ENCODE measurements at regions of chr9 and their contacts with region 1.

Region 1: DNA sequence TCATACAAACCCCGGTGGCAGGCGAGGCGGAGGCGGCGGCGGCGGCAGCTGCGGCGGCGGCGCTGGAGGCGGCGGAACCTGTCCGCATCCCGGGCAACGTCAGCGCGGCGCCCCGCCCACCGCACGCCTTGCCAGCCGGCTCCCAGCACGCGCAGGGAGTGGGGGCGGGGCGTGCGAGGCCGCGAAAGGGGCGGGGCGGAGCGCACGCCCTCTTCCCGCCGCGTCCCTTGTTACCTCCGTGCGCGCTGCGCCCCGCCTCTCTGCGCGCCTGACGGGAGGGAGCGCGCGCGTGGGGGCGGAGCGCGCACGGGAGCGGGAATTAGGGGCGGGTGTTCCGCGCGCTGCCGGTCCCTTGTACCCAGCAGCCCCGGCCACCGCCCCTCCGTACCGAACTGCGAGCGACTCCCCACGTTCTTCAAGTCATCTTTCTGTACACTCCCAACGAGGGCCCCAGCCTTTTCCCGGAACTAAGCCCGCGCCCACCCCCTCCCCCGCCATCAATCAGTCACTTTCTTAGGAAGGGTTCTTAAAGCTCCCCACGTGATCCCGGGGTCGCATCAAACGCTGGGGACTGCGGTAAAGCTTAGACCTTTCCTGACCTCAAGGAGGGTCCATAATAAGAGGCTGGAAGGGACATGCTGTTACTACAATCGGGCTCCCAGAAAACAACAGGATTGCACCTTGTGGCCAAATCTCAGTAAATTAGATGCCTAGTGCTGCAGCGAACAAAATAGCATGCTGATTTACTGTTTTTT is at the start of gene AGTPBP1:
- DNase-seq: peak; percentile 78
- ATAC-seq: peak; percentile 86
- H3K4me3 ChIP-seq: peak within 1 kb of the TSS; percentile 78 to 95 (median 84)
- H3K27ac ChIP-seq: peak within 1 kb of the TSS; percentile 84
- H3K4me1 ChIP-seq: peaks cover 39% of the 10 kb centered on the region
- H3K27me3 ChIP-seq: peaks cover 0 to 4% of the 10 kb centered on the region in 2 experiments; a peak in 2 of 5 replicates
- CTCF ChIP-seq: no peak
- EP300 ChIP-seq: no peak; a peak in 1 of 4 replicates
- POLR2A ChIP-seq: peak in 1 of 2 experiments; percentile 55; a peak in 1 of 4 replicates
- RAD21 ChIP-seq: no peak; the same call in 1 of the 2 replicates
- total RNA-seq, gene AGTPBP1: 22.3 and 23.9 TPM in 2 replicates

Region 2: GRCh38 chr9:85702726-85703289 is 39.2 kb before region 1 on chr9:
- CTCF ChIA-PET with region 1: no interaction called
- POLR2A ChIA-PET with region 1: no interaction called
- in situ Hi-C with region 1: no loop called
- intact Hi-C with region 1: loop called (anchors 1 kb)
- DNase-seq: no peak
- ATAC-seq: no peak
- H3K4me3 ChIP-seq: no peak overlapping the region
- H3K27ac ChIP-seq: no peak overlapping the region
- H3K4me1 ChIP-seq: no peaks in the 10 kb centered on the region
- H3K27me3 ChIP-seq: no peaks in the 10 kb centered on the region
- CTCF ChIP-seq: no peak
- EP300 ChIP-seq: no peak
- POLR2A ChIP-seq: no peak
- RAD21 ChIP-seq: no peak

Region 3: DNA sequence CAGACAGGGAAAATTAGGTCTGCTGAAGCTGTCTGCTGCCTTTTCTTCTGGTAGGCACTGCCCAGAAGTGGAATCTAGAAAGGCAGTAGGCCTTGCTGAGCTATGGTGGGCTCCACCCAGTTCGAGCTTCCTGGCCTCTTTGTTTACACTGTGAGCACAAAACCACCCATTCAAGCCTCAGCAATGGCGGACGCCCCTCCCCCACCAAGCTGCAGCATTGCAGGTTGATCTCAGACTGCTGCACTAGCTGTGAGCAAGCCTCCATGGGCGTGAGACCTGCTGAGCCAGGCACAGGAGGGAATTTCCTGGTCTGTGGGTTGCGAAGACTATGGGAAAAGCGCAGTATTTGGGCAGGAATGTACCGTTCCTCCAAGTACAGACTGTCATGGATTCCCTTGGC is 18.8 kb before region 1 on chr9:
- CTCF ChIA-PET with region 1: no interaction called
- POLR2A ChIA-PET with region 1: interaction called, 7 read pairs
- in situ Hi-C with region 1: no loop called
- intact Hi-C with region 1: loop called (anchors 1 kb)
- DNase-seq: peak; percentile 90
- ATAC-seq: peak; percentile 95
- H3K4me3 ChIP-seq: peak overlapping the region in 1 of 3 experiments; percentile 17; a peak in 2 of 6 replicates
- H3K27ac ChIP-seq: peak overlapping the region; percentile 62
- H3K4me1 ChIP-seq: peaks cover 33% of the 10 kb centered on the region
- H3K27me3 ChIP-seq: no peaks in the 10 kb centered on the region
- CTCF ChIP-seq: no peak
- EP300 ChIP-seq: no peak
- POLR2A ChIP-seq: no peak
- RAD21 ChIP-seq: no peak